ENCODE measurements at regions of chr6 and their contacts with region 1.

Region 1: GRCh38 chr6:2245094-2245876 is at the start of gene GMDS:
- DNase-seq: peak; percentile 93
- ATAC-seq: peak; percentile 97
- H3K4me3 ChIP-seq: peak within 1 kb of the TSS; percentile 65 to 98 (median 86)
- H3K4me3 Mint-ChIP-seq: peak within 1 kb of the TSS; percentile 92
- H3K27ac ChIP-seq: peak within 1 kb of the TSS; percentile 85 to 95
- H3K27ac Mint-ChIP-seq: peak within 1 kb of the TSS; percentile 92
- H3K4me1 ChIP-seq: peaks cover 14 to 21% of the 10 kb centered on the region in 2 donors
- H3K4me1 Mint-ChIP-seq: peaks cover 34% of the 10 kb centered on the region
- H3K27me3 ChIP-seq: no peaks in the 10 kb centered on the region
- H3K27me3 Mint-ChIP-seq: no peaks in the 10 kb centered on the region
- CTCF ChIP-seq: no peak
- total RNA-seq, gene GMDS: 16.4 and 22.5 TPM in 2 replicates

Region 2: GRCh38 chr6:2221726-2222274 is 23.5 kb before region 1 on chr6:
- CTCF ChIA-PET with region 1: no interaction called
- POLR2A ChIA-PET with region 1: no interaction called
- intact Hi-C with region 1: loop called (anchors 2 kb)
- DNase-seq: peak; percentile 37
- ATAC-seq: peak; percentile 17
- H3K4me3 ChIP-seq: peak overlapping the region; percentile 62 to 84 (median 81)
- H3K4me3 Mint-ChIP-seq: peak overlapping the region; percentile 87
- H3K27ac ChIP-seq: peak overlapping the region; percentile 67 to 84
- H3K27ac Mint-ChIP-seq: peak overlapping the region; percentile 83
- H3K4me1 ChIP-seq: peaks cover 6 to 10% of the 10 kb centered on the region in 2 donors
- H3K4me1 Mint-ChIP-seq: peaks cover 16% of the 10 kb centered on the region
- H3K27me3 ChIP-seq: no peaks in the 10 kb centered on the region
- H3K27me3 Mint-ChIP-seq: no peaks in the 10 kb centered on the region
- CTCF ChIP-seq: no peak

Region 3: DNA sequence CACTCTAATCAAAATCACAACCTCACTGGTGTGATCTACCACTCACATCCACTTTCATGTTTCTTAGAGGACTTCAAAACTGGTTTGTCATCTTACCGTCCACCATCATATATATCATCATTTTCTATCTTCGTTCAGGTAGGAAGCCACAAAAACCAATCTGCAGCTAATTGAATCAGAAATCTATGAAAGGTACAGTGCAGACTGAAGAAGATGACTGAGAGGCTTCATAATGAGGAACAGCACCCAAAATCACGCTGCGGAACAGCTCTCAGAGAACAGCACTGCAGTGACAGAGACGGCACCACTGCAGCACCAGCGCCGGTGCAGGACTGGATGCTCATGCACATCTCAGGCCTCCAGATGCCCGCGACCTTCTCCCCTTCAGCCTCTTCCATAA is 12.8 kb before region 1 on chr6:
- CTCF ChIA-PET with region 1: no interaction called
- POLR2A ChIA-PET with region 1: no interaction called
- intact Hi-C with region 1: loop called (anchors 1 kb)
- DNase-seq: peak; percentile 51
- ATAC-seq: peak; percentile 61
- H3K4me3 ChIP-seq: no peak overlapping the region
- H3K4me3 Mint-ChIP-seq: no peak overlapping the region
- H3K27ac ChIP-seq: no peak overlapping the region
- H3K27ac Mint-ChIP-seq: peak overlapping the region; percentile 38
- H3K4me1 ChIP-seq: peaks cover 14 to 19% of the 10 kb centered on the region in 2 donors
- H3K4me1 Mint-ChIP-seq: peaks cover 29% of the 10 kb centered on the region
- H3K27me3 ChIP-seq: no peaks in the 10 kb centered on the region
- H3K27me3 Mint-ChIP-seq: no peaks in the 10 kb centered on the region
- CTCF ChIP-seq: no peak

Region 4: DNA sequence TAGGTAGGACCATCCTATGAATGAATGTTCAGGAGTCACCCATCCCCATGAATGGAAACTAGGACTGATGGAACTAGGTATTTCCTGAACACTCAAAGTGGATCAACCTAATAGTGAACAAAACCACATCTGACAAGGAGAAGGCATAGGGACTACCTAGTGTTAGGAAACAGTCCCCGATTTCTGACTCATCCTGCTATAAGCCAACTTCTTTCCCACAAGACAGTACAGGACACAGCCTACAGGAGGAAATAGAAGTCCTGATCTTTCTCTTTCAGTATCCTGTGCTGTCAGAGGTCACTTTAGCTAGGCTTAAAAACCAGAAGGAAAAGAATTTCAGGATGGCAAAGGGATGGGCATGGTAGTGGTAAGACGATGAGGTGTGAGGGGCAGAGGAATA is 19.6 kb after region 1 on chr6:
- CTCF ChIA-PET with region 1: no interaction called
- POLR2A ChIA-PET with region 1: no interaction called
- intact Hi-C with region 1: no loop called
- DNase-seq: no peak
- ATAC-seq: no peak
- H3K4me3 ChIP-seq: no peak overlapping the region
- H3K4me3 Mint-ChIP-seq: no peak overlapping the region
- H3K27ac ChIP-seq: no peak overlapping the region
- H3K27ac Mint-ChIP-seq: no peak overlapping the region
- H3K4me1 ChIP-seq: no peaks in the 10 kb centered on the region
- H3K4me1 Mint-ChIP-seq: no peaks in the 10 kb centered on the region
- H3K27me3 ChIP-seq: no peaks in the 10 kb centered on the region
- H3K27me3 Mint-ChIP-seq: no peaks in the 10 kb centered on the region
- CTCF ChIP-seq: no peak

Region 5: GRCh38 chr6:2738373-2738979 is 493.2 kb after region 1 on chr6:
- CTCF ChIA-PET with region 1: no interaction called
- POLR2A ChIA-PET with region 1: no interaction called
- intact Hi-C with region 1: loop called (anchors 10 kb)
- DNase-seq: peak; percentile 62
- ATAC-seq: peak; percentile 31
- H3K4me3 ChIP-seq: no peak overlapping the region
- H3K4me3 Mint-ChIP-seq: no peak overlapping the region
- H3K27ac ChIP-seq: no peak overlapping the region
- H3K27ac Mint-ChIP-seq: no peak overlapping the region
- H3K4me1 ChIP-seq: peaks cover 3 to 4% of the 10 kb centered on the region in 2 donors
- H3K4me1 Mint-ChIP-seq: peaks cover 5% of the 10 kb centered on the region
- H3K27me3 ChIP-seq: no peaks in the 10 kb centered on the region
- H3K27me3 Mint-ChIP-seq: peaks cover 2% of the 10 kb centered on the region
- CTCF ChIP-seq: peak; percentile 71